ENCODE measurements at regions of chr13 and their contacts with region 1.

Region 1: GRCh38 chr13:102915393-102915930 is 69.6 kb downstream of the ERCC5 start:
- DNase-seq: no peak
- H3K4me3 Mint-ChIP-seq: no peak overlapping the region
- H3K27ac Mint-ChIP-seq: no peak overlapping the region
- H3K4me1 Mint-ChIP-seq: no peaks in the 10 kb centered on the region
- H3K27me3 Mint-ChIP-seq: peaks cover 18% of the 10 kb centered on the region

Region 2: DNA sequence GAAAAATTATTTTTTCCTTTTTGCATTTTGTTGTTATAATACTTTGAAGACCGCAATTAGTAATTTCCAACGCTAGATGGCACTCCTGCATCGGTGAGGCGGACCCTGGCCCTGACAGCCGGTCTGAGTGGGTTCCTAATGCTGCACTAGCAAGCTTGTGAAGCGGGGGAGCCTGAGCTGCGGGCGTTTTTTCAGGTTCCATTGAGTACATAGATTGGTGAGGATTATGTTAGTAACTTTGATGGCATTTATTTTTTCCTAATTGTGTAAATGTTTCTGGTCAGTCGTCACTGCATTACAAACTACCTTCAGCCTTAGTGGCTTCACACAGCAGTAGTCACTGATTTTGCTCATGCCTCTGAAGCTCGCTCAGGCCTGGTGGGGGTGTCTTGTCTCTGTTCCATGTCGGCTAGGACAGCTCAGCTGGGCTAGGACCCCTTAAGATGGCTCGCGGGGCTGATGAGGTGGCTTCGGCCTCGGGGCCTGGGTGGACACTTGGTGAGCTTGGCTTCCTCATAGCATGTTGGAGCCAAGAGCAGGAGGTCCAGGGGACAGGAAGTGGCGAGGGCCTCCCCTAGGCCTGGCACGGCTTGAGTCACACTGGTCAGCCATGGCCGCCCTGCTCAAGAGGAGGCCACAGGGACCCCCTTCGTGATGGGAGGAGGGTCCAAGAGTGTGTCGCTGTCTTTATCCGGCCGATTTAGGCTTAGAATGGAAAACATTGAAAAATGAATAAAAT is 44.6 kb before region 1 on chr13:
- intact Hi-C with region 1: loop called (anchors 5 kb)
- DNase-seq: peak; percentile 81
- H3K4me3 Mint-ChIP-seq: no peak overlapping the region
- H3K27ac Mint-ChIP-seq: peak overlapping the region; percentile 68
- H3K4me1 Mint-ChIP-seq: peaks cover 22% of the 10 kb centered on the region
- H3K27me3 Mint-ChIP-seq: no peaks in the 10 kb centered on the region

Region 3: DNA sequence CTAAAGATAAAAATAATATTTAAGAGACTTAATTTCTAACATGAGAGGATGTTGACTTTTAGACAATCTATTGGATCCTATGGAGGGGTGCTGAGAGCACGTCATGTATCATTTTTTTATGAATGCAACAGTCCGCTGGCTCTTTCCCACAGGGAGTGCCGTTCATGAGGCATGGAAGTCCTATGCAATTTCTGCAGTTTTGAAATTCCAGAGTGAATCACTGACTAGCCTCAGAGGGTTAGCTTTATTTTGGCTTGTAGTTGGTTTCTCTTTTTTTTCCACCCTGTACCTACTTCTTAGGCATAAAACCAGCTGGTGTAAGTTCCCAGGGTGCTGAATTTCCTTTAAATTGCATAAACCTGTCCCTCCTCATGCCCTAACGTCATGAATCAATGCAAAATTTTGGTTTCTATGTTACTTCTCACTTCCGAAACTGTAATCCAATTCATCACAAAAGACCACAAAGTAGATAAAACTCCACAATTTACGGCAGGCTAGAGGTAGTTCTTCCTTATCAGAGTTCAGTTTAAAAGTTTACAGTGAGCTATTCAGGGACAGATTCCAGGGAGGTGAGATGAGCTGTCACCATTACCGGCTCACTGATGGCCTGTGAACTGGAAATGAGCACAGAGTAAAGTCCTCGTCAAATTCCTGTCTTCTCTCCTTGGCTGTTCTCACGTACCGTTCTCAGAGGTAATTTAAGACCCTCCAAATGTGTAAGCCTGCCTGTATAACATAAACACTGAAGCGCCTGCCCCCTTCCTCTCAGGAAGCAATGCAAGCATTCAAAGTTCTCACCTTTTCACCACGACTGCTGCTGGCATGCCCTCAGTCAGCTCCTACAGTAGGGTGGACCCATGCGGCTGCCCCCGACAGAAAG is 367.3 kb after region 1 on chr13:
- intact Hi-C with region 1: no loop called
- DNase-seq: no peak
- H3K4me3 Mint-ChIP-seq: no peak overlapping the region
- H3K27ac Mint-ChIP-seq: no peak overlapping the region
- H3K4me1 Mint-ChIP-seq: no peaks in the 10 kb centered on the region
- H3K27me3 Mint-ChIP-seq: peaks cover 2% of the 10 kb centered on the region

Measured in activated CD4-positive, alpha-beta T cell treated with anti-CD3 and anti-CD28 coated beads, Interleukin-2, amount 10 ng/mL, durations not matched to agents 24 days and 14 days (primary cell).